ENCODE measurements at regions of chr6 and their contacts with region 1.

Region 1: GRCh38 chr6:98845211-98846020 is 11.0 kb downstream of the POU3F2 start:
- DNase-seq: peak in 6 of 9 donors; percentile 52 to 68 (median 64)
- ATAC-seq: peak; percentile 80
- H3K4me3 ChIP-seq: no peak overlapping the region
- H3K4me3 Mint-ChIP-seq: peak overlapping the region; percentile 59 to 77 (median 74)
- H3K27ac ChIP-seq: no peak overlapping the region
- H3K27ac Mint-ChIP-seq: peak overlapping the region in 1 of 9 donors; percentile 71
- H3K4me1 ChIP-seq: peaks cover 3 to 28% of the 10 kb centered on the region in 2 donors
- H3K4me1 Mint-ChIP-seq: peaks cover 12 to 43% (median 25%) of the 10 kb centered on the region in 7 donors
- H3K27me3 ChIP-seq: peaks cover 18 to 55% of the 10 kb centered on the region in 2 donors
- H3K27me3 Mint-ChIP-seq: peaks cover 79 to 89% (median 86%) of the 10 kb centered on the region in 5 donors

Region 2: DNA sequence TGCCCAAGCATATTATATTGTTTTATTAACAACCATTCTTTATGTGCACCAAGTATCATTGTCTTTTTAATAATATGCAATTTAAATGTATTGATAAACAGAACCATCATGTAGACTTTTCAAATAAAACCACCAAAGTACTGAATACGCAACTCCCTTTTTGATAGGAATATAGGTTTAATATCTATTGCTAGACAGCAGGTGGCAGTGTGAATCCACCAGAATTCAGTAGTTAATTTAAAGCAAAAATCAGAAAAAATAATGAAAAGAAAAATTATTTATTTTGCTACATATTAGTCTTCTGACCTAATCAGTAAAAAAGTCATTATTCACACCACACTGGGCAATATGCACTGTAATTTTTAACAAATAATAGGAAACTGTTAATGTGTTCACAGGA is 1777.2 kb before region 1 on chr6:
- CTCF ChIA-PET with region 1: no interaction called
- POLR2A ChIA-PET with region 1: no interaction called
- intact Hi-C with region 1: loop called in 1 of 2 experiments (anchors 5 kb)
- DNase-seq: peak in 2 of 9 donors; percentile 8
- ATAC-seq: no peak
- H3K4me3 ChIP-seq: no peak overlapping the region
- H3K4me3 Mint-ChIP-seq: no peak overlapping the region
- H3K27ac ChIP-seq: no peak overlapping the region
- H3K27ac Mint-ChIP-seq: no peak overlapping the region
- H3K4me1 ChIP-seq: no peaks in the 10 kb centered on the region
- H3K4me1 Mint-ChIP-seq: no peaks in the 10 kb centered on the region
- H3K27me3 ChIP-seq: no peaks in the 10 kb centered on the region
- H3K27me3 Mint-ChIP-seq: no peaks in the 10 kb centered on the region

Region 3: GRCh38 chr6:97186416-97186999 is 1658.9 kb before region 1 on chr6:
- CTCF ChIA-PET with region 1: interaction called, 3 read pairs
- POLR2A ChIA-PET with region 1: no interaction called
- intact Hi-C with region 1: loop called (anchors 1 to 5 kb)
- DNase-seq: peak; percentile 16 to 61 (median 48)
- ATAC-seq: peak; percentile 78
- H3K4me3 ChIP-seq: no peak overlapping the region
- H3K4me3 Mint-ChIP-seq: no peak overlapping the region
- H3K27ac ChIP-seq: no peak overlapping the region
- H3K27ac Mint-ChIP-seq: no peak overlapping the region
- H3K4me1 ChIP-seq: no peaks in the 10 kb centered on the region
- H3K4me1 Mint-ChIP-seq: peaks cover 0 to 3% (median 0%) of the 10 kb centered on the region in 7 donors
- H3K27me3 ChIP-seq: no peaks in the 10 kb centered on the region
- H3K27me3 Mint-ChIP-seq: no peaks in the 10 kb centered on the region

Region 4: DNA sequence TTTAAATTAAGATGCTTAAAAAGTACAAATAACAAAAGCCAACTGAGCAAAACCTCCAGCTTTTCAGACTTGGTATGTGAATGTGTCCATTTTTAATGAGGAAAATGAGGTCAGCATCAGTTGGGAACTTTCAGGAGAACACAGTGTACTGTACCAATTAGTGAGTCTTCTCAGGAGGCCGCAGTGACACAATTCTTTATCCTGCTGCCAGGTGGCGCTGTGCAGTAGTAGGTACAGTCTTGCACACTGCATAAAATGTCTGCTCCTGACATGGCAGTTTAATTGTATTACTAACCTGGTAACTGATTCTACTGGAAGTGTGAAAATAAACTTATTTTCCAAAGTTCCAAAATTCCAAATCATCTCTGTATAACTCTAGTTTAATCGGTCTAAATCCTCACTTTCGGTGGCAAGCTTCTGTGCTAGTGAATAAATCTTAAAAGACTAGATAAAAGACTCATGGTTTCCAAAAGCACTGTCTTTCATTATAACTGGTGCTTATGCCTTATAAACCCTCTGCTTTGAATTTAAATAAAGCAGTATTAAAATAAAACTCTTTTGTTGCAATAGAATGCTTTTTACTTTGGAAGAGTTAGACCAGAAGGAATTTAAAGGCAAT is 1347.6 kb before region 1 on chr6:
- CTCF ChIA-PET with region 1: interaction called, 7 read pairs
- POLR2A ChIA-PET with region 1: no interaction called
- intact Hi-C with region 1: loop called in 1 of 2 experiments (anchors 1 kb)
- DNase-seq: peak; percentile 12 to 54 (median 45)
- ATAC-seq: peak; percentile 90
- H3K4me3 ChIP-seq: no peak overlapping the region
- H3K4me3 Mint-ChIP-seq: no peak overlapping the region
- H3K27ac ChIP-seq: no peak overlapping the region
- H3K27ac Mint-ChIP-seq: no peak overlapping the region
- H3K4me1 ChIP-seq: no peaks in the 10 kb centered on the region
- H3K4me1 Mint-ChIP-seq: no peaks in the 10 kb centered on the region
- H3K27me3 ChIP-seq: no peaks in the 10 kb centered on the region
- H3K27me3 Mint-ChIP-seq: peaks cover 6 to 21% (median 14%) of the 10 kb centered on the region in 5 donors

Region 5: GRCh38 chr6:98769544-98769943 is 75.9 kb before region 1 on chr6:
- CTCF ChIA-PET with region 1: no interaction called
- POLR2A ChIA-PET with region 1: no interaction called
- intact Hi-C with region 1: loop called (anchors 1 to 5 kb)
- DNase-seq: peak in 3 of 9 donors; percentile 1 to 3 (median 3)
- ATAC-seq: no peak
- H3K4me3 ChIP-seq: no peak overlapping the region
- H3K4me3 Mint-ChIP-seq: no peak overlapping the region
- H3K27ac ChIP-seq: no peak overlapping the region
- H3K27ac Mint-ChIP-seq: no peak overlapping the region
- H3K4me1 ChIP-seq: no peaks in the 10 kb centered on the region
- H3K4me1 Mint-ChIP-seq: peaks cover 0 to 2% (median under 1%) of the 10 kb centered on the region in 7 donors
- H3K27me3 ChIP-seq: no peaks in the 10 kb centered on the region
- H3K27me3 Mint-ChIP-seq: peaks cover 8 to 48% (median 42%) of the 10 kb centered on the region in 5 donors

Region 6: DNA sequence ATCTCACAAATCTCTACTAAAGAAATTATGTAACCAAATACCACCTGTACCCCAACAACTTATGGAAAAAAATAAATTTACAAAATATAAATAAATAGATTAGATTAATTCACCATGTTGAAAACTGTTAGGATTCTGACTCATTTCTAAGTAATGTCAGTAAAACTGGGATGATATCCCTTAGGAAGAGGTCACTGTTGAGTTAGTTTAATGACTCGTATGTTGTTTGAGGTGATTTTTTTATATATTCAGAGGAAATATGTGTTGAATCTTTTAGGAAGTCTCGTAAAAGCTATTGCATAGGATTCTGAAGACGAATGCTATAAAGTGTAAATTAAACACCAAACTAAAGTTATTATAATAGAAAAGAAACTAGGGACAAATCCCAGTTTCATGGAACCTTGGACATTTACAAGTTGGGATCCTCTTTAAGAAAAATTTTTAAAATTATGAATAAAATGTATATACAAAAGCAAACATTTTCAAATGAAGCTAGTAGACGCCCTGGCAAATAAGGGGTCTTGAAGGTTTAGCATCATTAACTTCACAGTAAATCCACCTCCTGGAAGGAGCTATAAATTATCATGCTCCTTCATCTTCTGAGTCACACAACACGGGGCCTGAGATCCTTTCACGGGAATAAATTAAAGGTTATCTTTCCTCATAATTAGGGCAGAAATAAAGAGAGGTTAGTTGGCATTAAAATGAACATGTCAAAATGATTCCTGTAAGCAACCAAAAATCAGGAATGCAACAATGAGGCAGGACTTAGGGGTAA is 48.0 kb before region 1 on chr6:
- CTCF ChIA-PET with region 1: no interaction called
- POLR2A ChIA-PET with region 1: no interaction called
- intact Hi-C with region 1: no loop called
- DNase-seq: no peak
- ATAC-seq: no peak
- H3K4me3 ChIP-seq: no peak overlapping the region
- H3K4me3 Mint-ChIP-seq: no peak overlapping the region
- H3K27ac ChIP-seq: no peak overlapping the region
- H3K27ac Mint-ChIP-seq: no peak overlapping the region
- H3K4me1 ChIP-seq: no peaks in the 10 kb centered on the region
- H3K4me1 Mint-ChIP-seq: no peaks in the 10 kb centered on the region
- H3K27me3 ChIP-seq: no peaks in the 10 kb centered on the region
- H3K27me3 Mint-ChIP-seq: peaks cover 8 to 47% (median 35%) of the 10 kb centered on the region in 5 donors

Region 7: DNA sequence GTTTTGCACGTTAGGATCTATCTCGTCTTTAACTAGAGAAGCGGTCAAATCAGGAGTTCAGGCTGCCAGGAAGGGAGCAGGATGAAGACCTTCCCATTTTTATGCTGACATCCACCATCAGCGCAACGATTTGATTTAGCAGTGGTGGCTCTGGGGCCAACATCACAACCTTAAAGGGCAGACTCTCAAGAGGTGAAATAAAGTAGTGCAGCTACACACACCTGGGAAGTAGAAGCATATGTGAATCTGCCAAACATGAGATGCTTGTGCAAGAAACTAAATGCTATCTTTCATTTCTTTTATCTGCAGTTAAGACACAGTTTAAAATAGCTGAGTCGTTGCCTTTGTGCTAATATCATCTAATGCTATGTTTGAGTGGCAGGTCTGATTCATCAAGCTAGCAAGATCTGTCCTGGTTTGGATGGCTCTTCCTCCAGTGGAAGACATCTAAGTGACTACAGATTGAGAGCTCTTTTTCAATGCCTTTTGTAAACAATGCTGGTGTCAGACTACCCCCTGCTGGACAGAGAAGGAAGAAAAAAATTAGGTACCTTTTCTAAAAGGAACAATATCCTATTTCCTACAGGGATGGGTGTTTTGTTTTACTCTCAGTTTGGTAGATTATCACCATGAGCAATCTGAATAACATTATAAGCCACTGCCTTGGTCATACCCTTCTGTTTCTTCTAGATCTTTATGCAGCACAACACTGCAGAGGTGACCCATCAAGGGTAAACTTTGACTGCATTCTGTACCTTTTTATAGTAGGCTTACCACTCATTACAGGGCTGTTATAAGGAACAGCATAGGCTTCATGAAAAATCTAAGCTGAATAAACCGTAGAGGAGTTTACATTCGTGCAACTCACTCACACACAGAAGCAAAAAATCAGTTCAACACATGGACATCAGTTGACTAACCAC is 274.0 kb after region 1 on chr6:
- CTCF ChIA-PET with region 1: no interaction called
- POLR2A ChIA-PET with region 1: no interaction called
- intact Hi-C with region 1: loop called in 1 of 2 experiments (anchors 2 kb)
- DNase-seq: peak in 5 of 9 donors; percentile 21 to 39 (median 30)
- ATAC-seq: no peak
- H3K4me3 ChIP-seq: no peak overlapping the region
- H3K4me3 Mint-ChIP-seq: no peak overlapping the region
- H3K27ac ChIP-seq: no peak overlapping the region
- H3K27ac Mint-ChIP-seq: no peak overlapping the region
- H3K4me1 ChIP-seq: no peaks in the 10 kb centered on the region
- H3K4me1 Mint-ChIP-seq: no peaks in the 10 kb centered on the region
- H3K27me3 ChIP-seq: peaks cover 0 to 4% of the 10 kb centered on the region in 2 donors
- H3K27me3 Mint-ChIP-seq: peaks cover 18 to 47% (median 25%) of the 10 kb centered on the region in 5 donors